Gastrocnemius medialis (tissue), 4 donors: ENCODE measurements at regions of chr3 and their contacts with region 1.

Region 1: GRCh38 chr3:129627429-129628168 is 21.1 kb upstream of the PLXND1 start:
- DNase-seq: peak; percentile 49 to 71
- ATAC-seq: peak; percentile 57 to 61
- H3K4me3 ChIP-seq: peak overlapping the region; percentile 77 to 97 (median 88)
- H3K27ac ChIP-seq: peak overlapping the region; percentile 95 to 99 (median 97)
- H3K4me1 ChIP-seq: peaks cover 39 to 41% of the 10 kb centered on the region in 2 donors
- H3K27me3 ChIP-seq: no peaks in the 10 kb centered on the region
- CTCF ChIP-seq: peak; percentile 77 to 87 (median 83)
- POLR2A ChIP-seq: no peak

Region 2: DNA sequence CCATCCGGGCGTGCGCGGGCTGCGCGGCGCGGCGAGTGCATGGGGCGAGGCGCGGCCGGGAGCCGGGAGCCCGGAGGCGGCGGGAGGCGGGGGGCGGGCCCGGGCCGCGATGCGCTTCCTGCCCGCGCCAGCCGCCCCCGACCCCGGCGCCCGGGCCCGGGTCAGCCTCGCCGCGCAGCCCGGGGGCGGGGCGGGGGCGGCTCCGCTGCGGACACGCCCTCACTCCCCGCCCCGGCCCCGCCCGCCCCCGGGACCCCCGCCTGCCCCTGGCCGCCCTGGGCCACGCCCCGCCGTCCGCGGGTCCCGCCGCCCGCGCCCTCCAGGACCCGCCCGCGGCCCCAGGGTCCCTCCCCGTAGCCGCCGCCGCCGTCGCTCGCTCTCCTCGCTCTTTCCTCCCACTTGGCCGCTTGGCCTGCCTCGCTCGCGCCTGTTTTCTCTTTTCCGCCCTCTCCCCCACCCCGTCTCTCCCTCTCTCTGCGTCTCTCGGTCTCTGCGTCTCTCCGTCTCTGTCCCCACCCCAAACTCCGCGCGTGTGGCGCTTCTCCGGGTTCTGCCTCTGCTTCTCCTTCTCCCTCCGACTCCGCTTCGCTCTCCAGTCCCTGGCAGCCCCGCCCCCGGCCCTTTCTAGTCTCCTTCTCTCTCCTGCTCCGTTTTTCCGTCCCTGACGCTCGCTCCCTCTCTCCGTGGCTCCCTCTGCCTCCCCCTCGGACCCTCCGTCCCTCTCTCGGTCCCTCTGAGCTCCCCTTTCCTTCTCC is 20.8 kb before region 1 on chr3 and contains the start of gene PLXND1:
- in situ Hi-C with region 1: no loop called
- intact Hi-C with region 1: loop called (anchors 2 kb)
- DNase-seq: peak; percentile 47 to 51
- ATAC-seq: peak; percentile 38 to 52
- H3K4me3 ChIP-seq: peak within 1 kb of the TSS; percentile 61 to 66 (median 62)
- H3K27ac ChIP-seq: peak within 1 kb of the TSS; percentile 82 to 93 (median 86)
- H3K4me1 ChIP-seq: peaks cover 26 to 44% of the 10 kb centered on the region in 2 donors
- H3K27me3 ChIP-seq: peaks cover 0 to 15% (median 6%) of the 10 kb centered on the region in 3 donors
- CTCF ChIP-seq: no peak
- POLR2A ChIP-seq: peak; percentile 34 to 55
- total RNA-seq, gene PLXND1: 15.7 to 70.9 (median 19.9) TPM

Region 3: GRCh38 chr3:129688271-129688895 is 60.8 kb after region 1 on chr3:
- in situ Hi-C with region 1: no loop called
- intact Hi-C with region 1: loop called (anchors 2 kb)
- DNase-seq: peak; percentile 51 to 65
- ATAC-seq: peak; percentile 64 to 74
- H3K4me3 ChIP-seq: peak overlapping the region; percentile 38 to 50 (median 42)
- H3K27ac ChIP-seq: peak overlapping the region; percentile 75 to 88 (median 86)
- H3K4me1 ChIP-seq: peaks cover 63 to 73% of the 10 kb centered on the region in 2 donors
- H3K27me3 ChIP-seq: no peaks in the 10 kb centered on the region
- CTCF ChIP-seq: peak in 1 of 5 experiments; percentile 12
- POLR2A ChIP-seq: no peak